Activated CD4-positive, alpha-beta T cell treated with anti-CD3 and anti-CD28 coated beads for 36 hours (primary cell): ENCODE measurements at regions of chr2 and their contacts with region 1.

Region 1: GRCh38 chr2:38685116-38685735 is 19.3 kb downstream of the GALM start:
- DNase-seq: no peak
- ATAC-seq: peak; percentile 52
- H3K4me3 Mint-ChIP-seq: no peak overlapping the region
- H3K27ac Mint-ChIP-seq: no peak overlapping the region
- H3K4me1 Mint-ChIP-seq: peaks cover 47% of the 10 kb centered on the region
- H3K27me3 Mint-ChIP-seq: no peaks in the 10 kb centered on the region

Region 2: DNA sequence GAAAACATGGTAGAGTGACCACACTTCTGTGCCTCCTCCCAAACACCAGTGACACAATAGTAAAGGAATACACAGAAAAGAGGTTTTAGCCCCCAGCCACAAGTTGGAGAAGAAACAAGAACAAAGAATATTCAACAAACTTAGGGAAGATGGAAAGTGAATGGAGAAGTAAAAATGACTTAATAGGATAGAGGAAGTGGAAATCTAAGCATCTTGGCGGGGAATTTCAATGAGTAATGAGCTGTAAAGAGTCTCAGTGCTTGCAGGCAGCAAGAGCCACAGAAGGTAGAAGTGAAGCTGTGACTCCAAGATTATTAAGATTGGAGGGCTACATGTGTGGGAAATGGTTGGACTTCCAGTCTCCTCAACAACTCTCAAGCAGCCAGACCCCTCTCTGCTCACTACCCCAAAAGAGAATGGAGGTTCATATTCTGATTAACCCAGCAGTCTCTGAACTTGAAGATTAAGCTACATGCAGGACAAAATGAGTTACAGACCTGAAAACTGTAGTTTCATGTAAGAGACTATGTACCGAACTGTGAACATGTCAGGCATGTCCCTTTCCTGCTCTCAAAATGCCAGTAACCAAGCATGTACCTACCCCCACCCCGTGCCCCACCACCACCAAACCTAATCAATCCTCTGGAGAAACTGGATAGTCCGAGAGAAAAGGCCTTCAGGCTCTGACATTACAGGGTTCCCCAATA is 65.6 kb before region 1 on chr2:
- CTCF ChIA-PET with region 1: no interaction called
- POLR2A ChIA-PET with region 1: interaction called, 12 read pairs
- intact Hi-C with region 1: no loop called
- DNase-seq: no peak
- ATAC-seq: no peak
- H3K4me3 Mint-ChIP-seq: no peak overlapping the region
- H3K27ac Mint-ChIP-seq: no peak overlapping the region
- H3K4me1 Mint-ChIP-seq: peaks cover 24% of the 10 kb centered on the region
- H3K27me3 Mint-ChIP-seq: peaks cover 2% of the 10 kb centered on the region

Region 3: DNA sequence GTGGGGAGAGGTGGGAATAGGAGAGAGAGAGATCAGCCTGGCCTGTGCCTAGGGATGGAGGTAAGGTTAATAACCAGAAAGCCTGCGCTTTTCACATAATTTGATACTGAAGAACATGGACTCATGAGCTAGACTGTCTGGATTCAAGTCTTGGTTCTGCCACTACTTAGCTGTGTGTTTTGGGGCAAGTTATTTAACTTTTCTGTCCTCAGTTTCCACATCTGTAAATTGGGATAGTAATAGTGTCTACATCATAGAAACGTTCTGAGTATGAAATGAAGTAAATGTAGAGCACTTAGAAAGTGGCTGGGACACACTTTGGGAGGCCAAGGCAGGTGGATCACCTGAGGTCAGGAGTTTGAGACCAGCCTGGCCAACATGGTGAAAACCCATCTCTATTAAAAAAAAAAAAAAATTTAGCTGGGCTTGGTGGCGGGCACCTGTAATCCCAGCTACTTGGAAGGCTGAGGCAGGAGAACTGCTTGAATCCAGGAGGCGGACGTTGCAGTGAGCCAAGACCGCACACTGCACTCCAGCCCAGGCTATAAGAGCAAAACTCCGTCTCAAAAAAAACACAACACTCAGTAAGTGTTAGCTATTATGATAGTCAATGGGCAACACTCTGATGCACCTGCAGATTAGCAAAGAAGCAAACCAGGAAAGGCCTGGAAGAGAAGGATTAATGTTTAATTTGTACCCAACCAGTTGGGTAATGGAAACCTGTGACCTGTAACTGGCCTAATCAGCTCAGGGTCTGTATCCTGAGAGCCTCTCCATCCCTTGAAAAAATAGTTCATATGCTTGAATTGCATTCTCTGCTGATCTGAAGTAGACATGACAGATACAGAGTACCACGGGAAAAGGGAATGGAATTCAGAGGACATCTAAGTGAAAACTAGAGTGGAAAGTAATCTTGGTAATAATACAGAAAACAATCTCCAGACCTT is 12.5 kb before region 1 on chr2:
- CTCF ChIA-PET with region 1: interaction called, 19 read pairs
- POLR2A ChIA-PET with region 1: interaction called, 3 read pairs
- intact Hi-C with region 1: loop called (anchors 1 to 2 kb)
- DNase-seq: no peak
- ATAC-seq: no peak
- H3K4me3 Mint-ChIP-seq: no peak overlapping the region
- H3K27ac Mint-ChIP-seq: peak overlapping the region; percentile 59
- H3K4me1 Mint-ChIP-seq: peaks cover 65% of the 10 kb centered on the region
- H3K27me3 Mint-ChIP-seq: no peaks in the 10 kb centered on the region

Region 4: DNA sequence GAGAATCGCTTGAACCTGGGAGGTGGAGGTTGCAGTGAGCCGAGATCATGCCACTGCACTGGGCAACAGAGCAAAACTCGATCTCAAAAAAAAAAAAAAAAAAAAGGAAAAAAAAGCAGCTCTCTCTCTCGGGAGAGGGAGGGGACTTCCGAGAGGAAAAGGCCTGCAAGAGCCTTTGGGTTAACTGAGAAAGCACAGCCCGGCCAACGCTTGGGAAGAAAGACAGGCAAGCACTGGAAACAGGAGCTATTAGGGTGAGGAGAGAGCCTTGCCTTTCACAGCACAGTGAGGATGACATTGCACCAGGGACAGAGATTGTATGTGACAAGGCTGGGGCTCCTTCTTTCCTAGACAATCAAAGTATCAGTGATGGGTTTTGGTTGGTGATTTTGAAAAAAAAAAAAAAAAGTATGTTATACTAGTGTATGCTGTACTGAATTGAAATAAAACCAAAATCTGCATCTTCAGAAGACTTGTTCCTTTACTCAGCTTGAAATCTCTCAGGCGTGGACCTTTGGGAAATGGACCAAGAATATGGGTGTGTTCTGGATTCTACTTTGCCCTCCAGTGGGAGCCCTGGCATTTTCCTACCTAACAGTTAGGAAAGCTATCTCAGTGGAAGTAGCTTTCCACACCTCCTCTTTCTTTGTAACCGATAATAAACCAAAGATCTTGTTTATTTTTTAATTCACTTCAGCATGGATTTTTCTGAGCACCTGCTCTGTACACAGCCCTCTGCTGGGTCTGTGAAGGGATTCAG is 49.3 kb after region 1 on chr2:
- CTCF ChIA-PET with region 1: no interaction called
- POLR2A ChIA-PET with region 1: no interaction called
- intact Hi-C with region 1: no loop called
- DNase-seq: no peak
- ATAC-seq: no peak
- H3K4me3 Mint-ChIP-seq: no peak overlapping the region
- H3K27ac Mint-ChIP-seq: no peak overlapping the region
- H3K4me1 Mint-ChIP-seq: peaks cover 16% of the 10 kb centered on the region
- H3K27me3 Mint-ChIP-seq: no peaks in the 10 kb centered on the region